ENCODE measurements at regions of chr6 and their contacts with region 1.

Region 1: GRCh38 chr6:51753635-51754034 is 333.8 kb downstream of the PKHD1 start:
- DNase-seq: peak in 1 of 2 donors; percentile 22
- ATAC-seq: peak in 3 of 8 donors; percentile 41 to 71 (median 64)
- H3K4me3 ChIP-seq: no peak overlapping the region
- H3K27ac ChIP-seq: no peak overlapping the region
- H3K4me1 ChIP-seq: no peaks in the 10 kb centered on the region
- H3K27me3 ChIP-seq: peaks cover 0 to 3% (median 0%) of the 10 kb centered on the region in 7 donors
- CTCF ChIP-seq: peak in 7 of 9 donors; percentile 37 to 58 (median 54)

Region 2: DNA sequence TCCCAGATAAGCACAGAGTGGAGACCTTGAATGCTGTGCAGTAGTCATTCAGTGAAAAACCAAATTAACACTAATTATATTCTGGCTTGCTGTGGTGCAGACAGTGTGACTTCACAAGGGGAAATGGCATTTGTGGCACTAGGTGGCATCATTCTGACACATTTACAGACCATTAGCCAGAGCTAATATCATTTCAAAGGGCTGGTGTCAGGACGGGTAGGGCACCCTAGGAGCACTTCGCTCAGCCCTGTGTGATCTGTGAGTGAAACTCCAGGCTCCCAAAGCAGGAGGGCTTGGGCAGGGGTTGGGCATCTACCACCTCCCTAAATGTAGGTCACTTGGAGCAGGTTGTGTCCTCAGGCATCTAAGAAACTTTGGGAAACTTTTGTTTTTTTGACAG is 222.0 kb before region 1 on chr6:
- intact Hi-C with region 1: loop called in 4 of 10 experiments (anchors 1 to 10 kb)
- DNase-seq: no peak
- ATAC-seq: peak in 5 of 8 donors; percentile 48 to 73 (median 68)
- H3K4me3 ChIP-seq: no peak overlapping the region
- H3K27ac ChIP-seq: no peak overlapping the region
- H3K4me1 ChIP-seq: no peaks in the 10 kb centered on the region
- H3K27me3 ChIP-seq: no peaks in the 10 kb centered on the region
- CTCF ChIP-seq: peak in 7 of 9 donors; percentile 9 to 50 (median 39)

Region 3: DNA sequence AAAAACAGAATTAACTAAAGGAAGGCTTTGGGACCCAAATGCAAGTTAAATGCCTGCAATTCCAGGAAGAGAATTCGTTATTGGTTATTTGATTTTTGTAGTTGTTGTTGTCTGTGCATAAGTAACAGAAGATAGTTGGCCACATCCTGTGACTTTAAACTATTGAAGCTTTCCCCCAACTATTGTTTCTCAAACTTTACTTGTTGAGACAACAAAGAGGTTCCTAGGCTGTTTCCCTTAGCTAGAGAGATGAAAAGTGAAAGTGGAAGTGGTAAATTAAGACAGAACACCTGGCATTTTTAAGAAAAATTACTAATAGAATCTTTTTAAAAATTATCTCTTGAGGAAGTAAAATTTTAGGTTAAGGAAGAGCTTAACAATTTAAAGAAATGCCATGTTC is 191.4 kb before region 1 on chr6:
- intact Hi-C with region 1: loop called in 2 of 10 experiments (anchors 5 to 10 kb)
- DNase-seq: no peak
- ATAC-seq: no peak
- H3K4me3 ChIP-seq: no peak overlapping the region
- H3K27ac ChIP-seq: no peak overlapping the region
- H3K4me1 ChIP-seq: no peaks in the 10 kb centered on the region
- H3K27me3 ChIP-seq: peaks cover 0 to 4% (median 0%) of the 10 kb centered on the region in 7 donors
- CTCF ChIP-seq: no peak